Mammary epithelial cell (primary cell): ENCODE measurements at regions of chr11 and their contacts with region 1.

Region 1: DNA sequence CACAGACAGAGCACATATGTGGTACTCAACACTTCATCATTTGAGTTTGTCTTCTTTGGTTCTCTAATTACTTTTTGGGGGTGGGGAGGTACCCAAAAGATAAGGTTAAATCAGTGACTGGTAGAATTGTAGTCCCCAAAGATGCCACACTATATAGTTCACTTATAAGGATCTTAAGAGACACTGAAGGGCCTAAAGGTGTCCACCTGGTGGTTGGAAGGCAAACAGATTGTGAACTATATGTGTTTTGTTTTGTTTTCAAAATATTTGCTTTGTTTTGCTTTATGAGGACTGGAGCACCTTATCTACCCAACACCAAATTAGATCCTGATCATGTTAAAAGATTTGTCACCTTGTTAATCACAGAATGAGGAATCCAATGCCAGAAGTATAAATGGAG is 136.1 kb downstream of the DCDC1 start:
- DNase-seq: peak; percentile 6
- H3K4me3 ChIP-seq: no peak overlapping the region
- H3K27ac ChIP-seq: no peak overlapping the region
- H3K4me1 ChIP-seq: no peaks in the 10 kb centered on the region
- H3K27me3 ChIP-seq: no peaks in the 10 kb centered on the region
- CTCF ChIP-seq: peak; percentile 36 to 64

Region 2: GRCh38 chr11:31107062-31107461 is 126.4 kb before region 1 on chr11:
- CTCF ChIA-PET with region 1: interaction called, 7 read pairs
- dilution Hi-C with region 1: no loop called
- in situ Hi-C with region 1: loop called in 1 of 2 experiments (anchors 10 kb)
- intact Hi-C with region 1: loop called (anchors 1 kb)
- DNase-seq: peak; percentile 39
- H3K4me3 ChIP-seq: no peak overlapping the region
- H3K27ac ChIP-seq: no peak overlapping the region
- H3K4me1 ChIP-seq: no peaks in the 10 kb centered on the region
- H3K27me3 ChIP-seq: no peaks in the 10 kb centered on the region
- CTCF ChIP-seq: peak; percentile 77 to 85

Region 3: DNA sequence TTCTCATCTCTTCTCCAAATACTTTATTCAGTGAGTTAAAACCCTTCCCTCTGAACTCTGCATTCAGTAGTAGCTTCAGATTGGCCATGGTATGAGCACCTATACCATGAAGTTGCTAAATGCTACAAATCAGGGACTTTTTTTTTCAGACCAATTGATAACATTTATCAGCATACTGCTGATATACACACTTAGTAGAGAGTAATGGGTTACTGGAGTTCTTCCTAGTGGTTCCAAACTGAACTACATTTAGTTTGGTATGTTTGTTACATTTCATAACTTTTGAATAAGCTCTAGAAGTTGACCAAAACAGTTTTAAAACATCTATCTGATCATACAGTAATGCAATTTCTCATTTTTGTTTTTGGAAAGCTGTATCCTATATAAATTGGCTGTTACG is 31.4 kb after region 1 on chr11:
- CTCF ChIA-PET with region 1: no interaction called
- dilution Hi-C with region 1: no loop called
- in situ Hi-C with region 1: no loop called
- intact Hi-C with region 1: no loop called
- DNase-seq: no peak
- H3K4me3 ChIP-seq: no peak overlapping the region
- H3K27ac ChIP-seq: no peak overlapping the region
- H3K4me1 ChIP-seq: peaks cover 3% of the 10 kb centered on the region
- H3K27me3 ChIP-seq: no peaks in the 10 kb centered on the region
- CTCF ChIP-seq: no peak